ENCODE measurements at regions of chr17 and their contacts with region 1.

Region 1: GRCh38 chr17:78806451-78806850 is 24.4 kb upstream of the CYTH1 start:
- DNase-seq: no peak
- CTCF ChIP-seq: no peak

Region 2: GRCh38 chr17:78397681-78398101 is 408.8 kb before region 1 on chr17:
- in situ Hi-C with region 1: no loop called
- DNase-seq: no peak
- CTCF ChIP-seq: no peak

Region 3: GRCh38 chr17:78501241-78502036 is 305.0 kb before region 1 on chr17:
- in situ Hi-C with region 1: loop called (anchors 10 kb)
- DNase-seq: no peak
- CTCF ChIP-seq: no peak

Region 4: GRCh38 chr17:79126139-79126538 is 319.7 kb after region 1 on chr17:
- in situ Hi-C with region 1: no loop called
- DNase-seq: no peak
- CTCF ChIP-seq: no peak

Measured in GM13976 (cell line).